PC-9 (cell line): ENCODE measurements at regions of chr7 and their contacts with region 1.

Region 1: DNA sequence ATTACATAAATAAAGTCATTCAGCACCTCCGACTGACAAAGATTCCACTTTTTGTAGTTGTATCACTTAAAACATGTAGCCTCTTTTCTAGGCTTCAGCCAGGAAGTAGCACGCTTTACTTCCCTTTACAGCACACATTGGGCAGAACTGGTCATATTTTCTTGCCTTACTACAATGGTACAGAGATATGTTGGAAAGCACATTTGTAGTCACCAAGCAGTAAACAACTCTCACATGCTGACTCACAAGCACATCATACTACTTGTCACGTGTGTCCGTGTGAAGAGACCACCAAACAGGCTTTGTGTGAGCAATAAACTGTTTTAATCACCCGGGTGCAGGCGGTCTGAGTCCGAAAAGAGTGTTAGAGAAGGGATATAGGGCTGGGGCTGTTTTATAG is 1071.8 kb downstream of the DNAJB9 start:
- DNase-seq: no peak
- H3K4me3 ChIP-seq: no peak overlapping the region
- H3K27ac ChIP-seq: no peak overlapping the region
- H3K4me1 ChIP-seq: no peaks in the 10 kb centered on the region
- H3K27me3 ChIP-seq: no peaks in the 10 kb centered on the region
- CTCF ChIP-seq: no peak

Region 2: DNA sequence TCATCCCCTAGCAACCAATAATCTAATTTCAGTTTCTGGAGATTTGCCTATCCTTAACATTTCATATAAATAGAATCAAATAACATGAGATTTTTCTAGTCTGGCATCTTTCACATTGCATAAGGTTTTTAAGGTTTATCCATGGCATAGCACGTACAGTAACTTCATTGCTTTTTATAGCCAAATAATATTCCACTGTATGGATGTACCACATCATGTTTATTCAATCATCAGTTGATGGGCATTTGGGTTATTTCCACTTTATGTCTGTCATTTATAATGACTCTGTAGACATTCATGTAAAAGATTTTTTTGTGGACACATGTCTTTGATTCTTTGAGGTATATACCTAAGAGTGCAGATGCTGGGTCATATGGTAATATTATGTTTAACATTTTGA is 19.1 kb before region 1 on chr7:
- CTCF ChIA-PET with region 1: interaction called, 10 read pairs
- POLR2A ChIA-PET with region 1: no interaction called
- intact Hi-C with region 1: no loop called
- DNase-seq: no peak
- H3K4me3 ChIP-seq: no peak overlapping the region
- H3K27ac ChIP-seq: no peak overlapping the region
- H3K4me1 ChIP-seq: no peaks in the 10 kb centered on the region
- H3K27me3 ChIP-seq: no peaks in the 10 kb centered on the region
- CTCF ChIP-seq: no peak

Region 3: GRCh38 chr7:109772161-109772560 is 130.7 kb after region 1 on chr7:
- CTCF ChIA-PET with region 1: no interaction called
- POLR2A ChIA-PET with region 1: interaction called, 16 read pairs
- intact Hi-C with region 1: no loop called
- DNase-seq: no peak
- H3K4me3 ChIP-seq: no peak overlapping the region
- H3K27ac ChIP-seq: no peak overlapping the region
- H3K4me1 ChIP-seq: no peaks in the 10 kb centered on the region
- H3K27me3 ChIP-seq: no peaks in the 10 kb centered on the region
- CTCF ChIP-seq: no peak